Dendritic cell treated with granulocyte-macrophage colony-stimulating factor and Interleukin-4, amounts not matched to agents 40 ng/mL and 50 ng/mL, for 4 days (primary cell): ENCODE measurements at regions of chr3 and their contacts with region 1.

Region 1: GRCh38 chr3:99532246-99532645 is 106.1 kb upstream of the COL8A1 start:
- H3K4me3 Mint-ChIP-seq: no peak overlapping the region
- H3K27ac Mint-ChIP-seq: no peak overlapping the region
- H3K4me1 Mint-ChIP-seq: peaks cover 12% of the 10 kb centered on the region
- H3K27me3 Mint-ChIP-seq: no peaks in the 10 kb centered on the region

Region 2: DNA sequence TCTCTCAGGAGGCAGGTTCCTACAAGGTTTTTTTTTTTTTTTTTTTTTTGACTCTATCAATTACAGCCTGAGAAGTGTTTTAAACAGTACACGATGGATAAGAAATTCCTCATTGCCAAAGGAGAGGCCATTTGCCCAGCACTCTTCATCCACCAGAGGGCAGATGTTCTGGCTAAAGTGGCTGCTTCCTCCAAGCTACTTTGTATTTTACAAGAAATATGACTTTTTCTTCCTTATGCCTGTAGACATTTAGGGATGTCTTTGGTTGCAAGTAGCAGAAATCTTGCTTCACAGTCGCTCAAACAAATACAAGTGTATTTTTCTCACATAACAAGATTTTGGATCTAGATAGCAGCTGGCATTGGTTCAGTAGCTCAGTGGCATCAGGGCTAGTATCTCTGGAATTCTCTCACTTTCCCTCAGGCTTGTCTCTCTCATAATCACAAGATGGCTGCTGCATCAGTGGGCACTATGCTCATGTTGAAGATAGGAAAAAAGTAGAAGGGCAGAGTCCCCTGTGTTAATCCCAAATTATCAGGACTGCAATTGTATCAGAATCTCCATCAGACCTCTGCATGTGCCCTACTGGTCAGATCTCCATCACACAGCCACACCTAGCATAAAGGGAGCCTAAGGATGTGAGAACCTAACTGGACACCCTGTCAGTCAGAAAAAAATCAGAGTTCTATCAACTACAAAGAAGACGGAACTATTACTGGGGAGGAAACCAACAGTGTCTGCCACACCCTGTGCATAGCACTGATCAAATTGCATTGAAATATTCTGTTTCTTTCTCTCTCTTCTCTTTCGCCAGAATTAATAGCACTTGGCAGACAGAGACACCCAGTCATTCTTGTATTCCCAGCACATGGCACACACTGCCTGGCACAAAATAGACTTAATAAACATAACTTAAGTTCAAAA is 32.7 kb before region 1 on chr3:
- intact Hi-C with region 1: loop called (anchors 1 kb)
- H3K4me3 Mint-ChIP-seq: no peak overlapping the region
- H3K27ac Mint-ChIP-seq: no peak overlapping the region
- H3K4me1 Mint-ChIP-seq: peaks cover 12% of the 10 kb centered on the region
- H3K27me3 Mint-ChIP-seq: peaks cover 8% of the 10 kb centered on the region